ENCODE measurements at regions of chr11 and their contacts with region 1.

Region 1: DNA sequence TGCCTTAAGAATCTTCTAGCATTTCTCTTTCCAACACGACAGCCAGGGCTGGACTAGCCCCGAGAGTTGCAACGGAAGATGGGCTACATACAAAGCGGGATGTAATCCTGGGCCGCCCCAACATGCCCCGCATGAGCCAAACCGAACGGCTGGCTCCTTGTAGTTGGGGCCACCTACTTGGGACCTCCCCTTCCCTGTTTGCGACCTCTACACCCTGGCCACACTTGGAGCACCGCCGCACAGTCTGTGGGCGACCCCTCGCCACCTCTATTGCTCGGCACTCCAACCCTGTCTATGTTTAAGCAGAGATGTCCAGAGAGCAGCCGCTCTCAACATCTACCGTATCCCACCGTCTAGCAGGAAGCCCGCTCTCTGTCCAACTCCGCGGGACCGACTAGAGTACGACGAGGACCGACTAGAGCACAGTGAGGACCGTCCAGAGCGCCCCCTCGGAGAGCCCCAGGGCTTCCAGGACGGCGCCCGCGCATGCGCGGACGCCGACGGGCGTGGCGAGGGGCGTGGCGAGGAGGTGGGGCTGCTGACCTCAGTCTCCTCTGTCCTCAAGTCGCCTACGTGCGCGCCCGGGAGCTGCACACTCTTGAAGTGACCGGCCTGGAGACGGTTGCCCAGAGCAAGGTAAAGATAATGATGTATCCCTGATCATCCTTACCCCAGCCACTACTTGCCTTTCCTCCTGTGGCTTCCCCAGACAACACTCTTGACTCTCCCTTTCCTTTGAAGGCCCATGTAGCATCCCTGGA is 32.3 kb downstream of the NEAT1 start:
- DNase-seq: no peak
- H3K4me3 Mint-ChIP-seq: peak overlapping the region; percentile 66
- H3K27ac Mint-ChIP-seq: peak overlapping the region; percentile 27
- H3K4me1 Mint-ChIP-seq: peaks cover 9% of the 10 kb centered on the region
- H3K27me3 Mint-ChIP-seq: no peaks in the 10 kb centered on the region
- CTCF ChIP-seq: no peak

Region 2: GRCh38 chr11:65471410-65471762 is 16.5 kb after region 1 on chr11:
- CTCF ChIA-PET with region 1: interaction called, 5 read pairs
- POLR2A ChIA-PET with region 1: interaction called, 81 read pairs
- intact Hi-C with region 1: no loop called
- DNase-seq: peak; percentile 85
- H3K4me3 Mint-ChIP-seq: no peak overlapping the region
- H3K27ac Mint-ChIP-seq: peak overlapping the region; percentile 97
- H3K4me1 Mint-ChIP-seq: peaks cover 15% of the 10 kb centered on the region
- H3K27me3 Mint-ChIP-seq: no peaks in the 10 kb centered on the region
- CTCF ChIP-seq: peak; percentile 25

Region 3: DNA sequence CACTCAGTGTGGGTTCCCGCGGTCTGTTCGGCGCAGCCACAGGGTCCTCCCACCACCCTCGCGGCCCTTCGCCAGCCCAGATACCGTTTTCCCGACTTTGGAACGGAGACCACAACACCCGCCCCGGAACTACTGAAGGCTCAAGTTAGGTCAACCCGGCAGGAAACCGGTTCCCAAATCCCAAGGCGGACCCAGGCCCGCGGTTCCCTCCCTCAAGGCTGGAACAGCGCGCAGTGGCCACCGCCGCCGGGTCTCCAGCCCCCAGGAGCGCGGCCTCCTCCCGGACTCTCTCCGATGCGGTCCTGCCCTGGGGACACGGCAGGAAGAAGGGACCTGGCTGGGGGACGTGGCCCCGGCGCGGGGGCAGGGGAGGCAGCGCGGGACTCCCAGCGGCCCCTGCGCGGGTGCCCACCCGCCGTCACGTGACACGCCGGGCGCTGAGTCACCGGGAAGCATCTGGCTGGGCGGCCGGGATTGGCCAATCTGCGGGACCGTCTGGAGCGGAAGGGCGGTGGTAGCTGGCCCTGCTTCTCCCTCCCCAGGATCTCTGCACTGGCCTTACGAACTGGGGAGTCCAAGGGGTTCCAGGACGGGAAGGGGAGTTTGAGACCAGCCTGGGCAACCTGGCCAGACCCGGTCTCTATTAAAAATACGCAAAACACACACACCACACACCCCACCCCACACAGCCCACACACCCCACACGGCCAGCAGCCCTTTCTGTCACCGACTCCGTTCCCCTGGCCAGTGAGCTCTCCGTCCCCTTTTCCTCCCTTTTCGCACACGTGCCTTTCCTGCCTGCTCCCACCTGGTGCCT is 22.5 kb after region 1 on chr11:
- CTCF ChIA-PET with region 1: no interaction called
- POLR2A ChIA-PET with region 1: interaction called, 81 read pairs
- intact Hi-C with region 1: no loop called
- DNase-seq: peak; percentile 96
- H3K4me3 Mint-ChIP-seq: peak overlapping the region; percentile 95
- H3K27ac Mint-ChIP-seq: peak overlapping the region; percentile 95
- H3K4me1 Mint-ChIP-seq: peaks cover 16% of the 10 kb centered on the region
- H3K27me3 Mint-ChIP-seq: no peaks in the 10 kb centered on the region
- CTCF ChIP-seq: no peak

Region 4: DNA sequence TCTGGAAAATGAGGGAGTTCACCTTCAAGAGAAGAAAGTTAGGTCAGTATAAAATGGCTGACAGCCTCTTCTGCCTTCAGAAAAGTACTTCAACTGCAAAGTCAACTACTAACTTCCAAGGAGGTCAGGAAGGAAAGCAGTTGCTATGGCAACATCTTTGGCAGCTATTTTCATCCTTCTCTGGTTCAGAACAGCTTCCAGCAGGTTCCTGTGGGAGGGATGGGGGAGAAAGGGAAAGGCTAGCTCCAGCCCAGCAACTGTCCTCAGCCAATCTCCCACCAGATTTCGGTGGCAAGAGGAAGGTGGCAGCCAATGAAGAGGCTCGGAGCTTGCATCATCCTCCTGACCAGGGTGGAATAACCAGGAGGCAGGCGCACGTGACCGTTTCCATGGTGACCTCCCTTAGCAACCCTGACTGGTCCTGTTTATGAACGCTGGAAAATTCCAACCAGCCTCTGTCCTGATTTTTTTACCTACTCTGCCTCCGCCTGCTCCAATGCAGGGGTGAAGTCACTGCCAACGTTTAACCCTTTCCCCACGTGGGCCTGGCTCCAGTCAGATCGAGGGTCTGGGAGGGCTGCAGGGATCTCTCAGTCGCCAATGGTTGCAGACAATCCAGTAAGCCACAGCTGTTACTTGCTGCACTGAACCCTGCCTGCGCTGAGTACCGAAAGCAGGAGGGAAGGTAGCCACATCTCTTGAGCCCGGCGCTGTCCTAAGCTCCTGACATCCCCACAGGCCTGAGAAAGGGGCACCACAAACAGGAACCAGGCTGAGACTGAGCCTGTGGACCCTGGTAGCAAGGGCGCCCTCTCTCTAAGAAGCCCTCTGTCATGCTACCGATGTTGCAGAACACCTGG is 32.8 kb after region 1 on chr11:
- CTCF ChIA-PET with region 1: interaction called, 3 read pairs
- POLR2A ChIA-PET with region 1: interaction called, 130 read pairs
- intact Hi-C with region 1: no loop called
- DNase-seq: peak; percentile 99
- H3K4me3 Mint-ChIP-seq: peak overlapping the region; percentile 24
- H3K27ac Mint-ChIP-seq: peak overlapping the region; percentile 79
- H3K4me1 Mint-ChIP-seq: peaks cover 47% of the 10 kb centered on the region
- H3K27me3 Mint-ChIP-seq: no peaks in the 10 kb centered on the region
- CTCF ChIP-seq: no peak

Measured in MCF 10A (cell line).